HAP-1 (cell line): ENCODE measurements at regions of chr3 and their contacts with region 1.

Region 1: GRCh38 chr3:62622553-62623193 is 249.3 kb upstream of the FEZF2 start:
- DNase-seq: peak; percentile 36 to 59
- H3K4me3 ChIP-seq: no peak overlapping the region
- H3K4me1 ChIP-seq: no peaks in the 10 kb centered on the region
- H3K27me3 ChIP-seq: peaks cover 23% of the 10 kb centered on the region

Region 2: GRCh38 chr3:62758296-62759066 is 135.8 kb after region 1 on chr3:
- in situ Hi-C with region 1: no loop called
- DNase-seq: no peak
- H3K4me3 ChIP-seq: no peak overlapping the region
- H3K4me1 ChIP-seq: no peaks in the 10 kb centered on the region
- H3K27me3 ChIP-seq: no peaks in the 10 kb centered on the region

Region 3: DNA sequence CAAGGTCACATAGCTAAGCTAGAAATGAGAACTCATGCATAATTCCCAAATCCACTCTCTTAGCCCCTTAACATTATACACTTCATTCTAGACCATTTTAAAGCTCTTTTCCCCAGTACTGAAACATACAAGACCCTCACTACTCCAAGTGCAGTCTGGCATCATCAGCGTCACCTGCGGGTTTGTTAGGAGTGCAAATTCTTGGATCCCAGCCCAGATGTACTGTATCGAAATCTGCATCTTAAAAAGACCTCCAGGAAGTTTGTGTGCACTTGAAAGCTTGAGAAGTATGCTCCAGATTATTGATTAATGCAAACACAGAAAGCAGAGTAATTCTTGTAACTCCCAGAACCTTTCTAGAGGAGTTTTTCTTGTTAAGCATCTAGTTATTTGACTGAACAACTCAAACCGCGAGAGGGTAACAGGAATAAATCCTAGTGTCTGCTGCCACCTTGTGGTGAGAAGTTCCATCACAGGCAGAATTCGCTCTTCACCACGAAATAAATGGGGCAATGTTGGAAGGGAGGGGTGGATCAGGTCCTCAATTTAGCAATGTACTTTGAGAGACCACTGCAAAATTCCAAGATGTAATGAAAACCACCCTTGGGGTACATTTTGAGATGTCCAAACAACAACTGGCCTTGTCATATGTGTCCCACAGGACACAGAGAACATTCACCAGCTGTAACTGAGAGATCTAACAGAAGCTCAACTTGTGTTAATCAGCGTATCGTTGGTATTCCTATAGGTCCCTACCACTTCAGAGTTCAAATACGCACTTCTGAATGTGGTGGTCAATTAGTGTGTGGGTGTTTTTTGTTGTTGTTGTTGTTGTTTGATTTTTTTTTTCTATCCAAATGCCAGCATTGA is 1195.8 kb after region 1 on chr3:
- in situ Hi-C with region 1: loop called (anchors 25 kb)
- DNase-seq: peak; percentile 59 to 71
- H3K4me3 ChIP-seq: no peak overlapping the region
- H3K4me1 ChIP-seq: peaks cover 4% of the 10 kb centered on the region
- H3K27me3 ChIP-seq: no peaks in the 10 kb centered on the region